K562 (cell line): ENCODE measurements at regions of chr3 and their contacts with region 1.

Region 1: GRCh38 chr3:183188895-183189462 is 26.4 kb upstream of the LAMP3 start:
- DNase-seq: peak; percentile 38 to 72 (median 50)
- ATAC-seq: peak; percentile 94
- H3K4me3 ChIP-seq: no peak overlapping the region
- H3K27ac ChIP-seq: no peak overlapping the region
- H3K4me1 ChIP-seq: 0 out of 5 replicates have a peak, but pooled peaks cover 0 to 2% of the 10 kb centered on the region in 2 experiments
- H3K27me3 ChIP-seq: no peaks in the 10 kb centered on the region
- CTCF ChIP-seq: peak; percentile 69 to 74 (median 73)
- EP300 ChIP-seq: no peak
- POLR2A ChIP-seq: no peak
- RAD21 ChIP-seq: peak; percentile 37 to 61

Region 2: GRCh38 chr3:183027276-183027675 is 161.7 kb before region 1 on chr3:
- CTCF ChIA-PET with region 1: no interaction called
- POLR2A ChIA-PET with region 1: no interaction called
- in situ Hi-C with region 1: no loop called
- intact Hi-C with region 1: no loop called
- DNase-seq: no peak
- ATAC-seq: no peak
- H3K4me3 ChIP-seq: no peak overlapping the region
- H3K27ac ChIP-seq: no peak overlapping the region
- H3K4me1 ChIP-seq: no peaks in the 10 kb centered on the region
- H3K27me3 ChIP-seq: no peaks in the 10 kb centered on the region
- CTCF ChIP-seq: no peak
- EP300 ChIP-seq: no peak
- POLR2A ChIP-seq: no peak
- RAD21 ChIP-seq: no peak

Region 3: DNA sequence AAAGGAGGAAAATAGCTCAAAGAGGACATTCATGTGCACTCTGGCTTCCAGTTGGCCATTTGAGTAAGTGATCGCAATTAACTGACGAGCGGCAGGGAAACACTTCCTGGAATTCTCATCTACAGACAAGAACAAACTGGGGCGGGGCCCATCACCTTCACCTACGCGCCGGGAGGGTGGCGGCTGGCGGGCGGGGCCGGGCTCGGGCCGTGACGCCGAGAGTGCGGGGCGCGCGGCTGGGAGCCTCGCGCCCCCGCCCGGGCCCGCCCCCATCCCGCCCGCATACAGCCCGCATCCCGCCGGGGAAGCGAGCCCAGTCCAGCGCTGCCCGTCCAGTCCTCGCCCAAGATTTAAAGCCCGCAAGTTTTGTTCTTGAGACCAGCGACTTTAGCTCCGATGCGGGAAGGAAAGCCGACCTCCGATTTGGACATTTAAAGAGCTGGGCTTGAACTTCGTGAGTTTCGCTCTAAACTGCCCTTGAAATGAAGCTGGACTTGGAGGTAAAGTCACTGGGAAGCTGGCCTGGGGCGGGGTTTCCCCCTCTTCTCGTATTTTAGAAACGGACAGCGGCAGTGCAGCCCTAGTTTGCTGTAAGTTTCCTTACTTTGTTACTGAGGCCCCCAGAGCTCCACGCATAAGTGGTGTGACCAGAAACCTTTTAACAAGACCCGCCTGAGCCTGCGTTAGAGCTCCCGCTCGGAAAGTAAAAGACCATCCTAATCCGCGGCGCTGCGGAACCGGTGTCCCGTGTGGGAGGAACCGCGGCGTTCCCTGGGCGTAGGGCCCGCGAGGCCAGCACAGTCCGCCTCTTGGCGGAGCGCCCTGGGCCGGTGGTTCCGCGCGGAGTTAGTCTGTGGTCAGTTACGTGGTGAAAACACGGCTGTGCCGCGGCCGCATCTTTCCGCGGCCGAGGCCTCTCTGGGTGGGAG is 64.3 kb after region 1 on chr3 and contains the start of gene B3GNT5:
- CTCF ChIA-PET with region 1: no interaction called
- POLR2A ChIA-PET with region 1: no interaction called
- in situ Hi-C with region 1: no loop called
- intact Hi-C with region 1: loop called (anchors 5 kb)
- DNase-seq: peak; percentile 64 to 86 (median 74)
- ATAC-seq: peak; percentile 65
- H3K4me3 ChIP-seq: peak within 1 kb of the TSS; percentile 52
- H3K27ac ChIP-seq: peak within 1 kb of the TSS; percentile 83
- H3K4me1 ChIP-seq: peaks cover 11 to 18% of the 10 kb centered on the region in 2 experiments; a peak in 4 of 5 replicates
- H3K27me3 ChIP-seq: no peaks in the 10 kb centered on the region
- CTCF ChIP-seq: no peak
- EP300 ChIP-seq: 0 out of 2 replicates have a peak, but pooled peaks have one; percentile 12
- POLR2A ChIP-seq: peak; percentile 57; the same call in 1 of the 2 replicates
- RAD21 ChIP-seq: no peak
- polyA plus RNA-seq, gene B3GNT5: 13.6 to 13.8 TPM

Region 4: GRCh38 chr3:183377307-183377959 is 188.5 kb after region 1 on chr3:
- CTCF ChIA-PET with region 1: interaction called, 61 read pairs
- POLR2A ChIA-PET with region 1: interaction called, 8 read pairs
- in situ Hi-C with region 1: no loop called
- intact Hi-C with region 1: loop called (anchors 1 kb)
- DNase-seq: no peak
- ATAC-seq: no peak
- H3K4me3 ChIP-seq: no peak overlapping the region
- H3K27ac ChIP-seq: no peak overlapping the region
- H3K4me1 ChIP-seq: peaks cover 4 to 14% of the 10 kb centered on the region in 2 experiments
- H3K27me3 ChIP-seq: no peaks in the 10 kb centered on the region
- CTCF ChIP-seq: no peak
- EP300 ChIP-seq: no peak
- POLR2A ChIP-seq: no peak
- RAD21 ChIP-seq: no peak

Region 5: GRCh38 chr3:183385698-183386613 is 197.0 kb after region 1 on chr3:
- CTCF ChIA-PET with region 1: interaction called, 61 read pairs
- POLR2A ChIA-PET with region 1: interaction called, 8 read pairs
- in situ Hi-C with region 1: loop called (anchors 5 kb)
- intact Hi-C with region 1: loop called (anchors 1 kb)
- DNase-seq: peak; percentile 59 to 79 (median 60)
- ATAC-seq: peak; percentile 89
- H3K4me3 ChIP-seq: no peak overlapping the region
- H3K27ac ChIP-seq: no peak overlapping the region
- H3K4me1 ChIP-seq: peaks cover 0 to 3% of the 10 kb centered on the region in 2 experiments; a peak in 3 of 5 replicates
- H3K27me3 ChIP-seq: no peaks in the 10 kb centered on the region
- CTCF ChIP-seq: peak; percentile 75 to 85 (median 75)
- EP300 ChIP-seq: no peak
- POLR2A ChIP-seq: no peak
- RAD21 ChIP-seq: peak; percentile 88 to 92

Region 6: DNA sequence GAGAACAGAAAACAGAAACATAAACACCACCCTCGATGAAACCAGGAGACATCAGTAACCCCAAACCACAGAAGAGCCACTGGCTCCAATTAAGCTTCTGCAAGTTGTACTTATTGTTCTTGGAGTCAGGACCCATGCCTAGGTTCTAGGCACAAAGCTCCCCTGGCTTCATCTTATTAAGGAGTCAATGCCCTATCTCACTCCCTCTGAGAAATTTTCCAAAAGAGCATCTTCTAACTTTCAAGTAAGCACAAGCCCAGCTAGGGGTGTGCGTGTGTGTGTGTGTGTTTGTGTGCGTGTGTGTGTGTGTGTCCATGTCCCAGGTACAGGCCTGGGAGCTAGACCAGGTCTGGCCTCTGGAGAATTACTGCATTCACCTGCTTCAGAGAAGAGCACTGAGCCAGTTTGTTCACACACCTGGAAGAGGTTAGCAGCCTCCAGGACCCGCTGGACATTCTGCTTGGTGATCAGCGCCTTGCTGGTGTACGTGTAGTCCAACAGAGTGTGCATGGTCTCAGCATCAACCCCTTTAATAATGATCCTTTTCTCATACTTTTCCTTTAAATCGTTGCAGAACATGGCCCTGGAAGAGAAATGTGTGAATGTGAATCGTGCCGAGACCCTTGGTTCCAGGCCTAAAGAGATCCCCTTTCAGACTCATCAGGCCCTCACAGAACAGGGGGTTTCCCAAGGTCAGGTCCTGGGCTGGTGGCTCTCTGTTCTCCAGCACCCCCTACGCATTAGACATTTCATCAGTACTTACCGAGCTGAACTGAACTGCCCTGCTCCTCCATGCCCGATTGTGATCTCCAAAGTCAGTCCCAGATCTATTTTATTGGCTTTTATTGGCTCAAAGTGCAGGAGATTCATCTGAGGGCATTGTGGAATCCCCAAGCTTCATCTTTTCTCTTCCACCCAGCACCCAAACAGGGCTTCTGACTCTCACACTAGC is 338.7 kb after region 1 on chr3:
- CTCF ChIA-PET with region 1: no interaction called
- POLR2A ChIA-PET with region 1: no interaction called
- in situ Hi-C with region 1: no loop called
- intact Hi-C with region 1: no loop called
- DNase-seq: no peak
- ATAC-seq: no peak
- H3K4me3 ChIP-seq: no peak overlapping the region
- H3K27ac ChIP-seq: no peak overlapping the region
- H3K4me1 ChIP-seq: peaks cover 0 to 5% of the 10 kb centered on the region in 2 experiments; a peak in 4 of 5 replicates
- H3K27me3 ChIP-seq: no peaks in the 10 kb centered on the region
- CTCF ChIP-seq: no peak
- EP300 ChIP-seq: no peak
- POLR2A ChIP-seq: no peak
- RAD21 ChIP-seq: no peak

Region 7: DNA sequence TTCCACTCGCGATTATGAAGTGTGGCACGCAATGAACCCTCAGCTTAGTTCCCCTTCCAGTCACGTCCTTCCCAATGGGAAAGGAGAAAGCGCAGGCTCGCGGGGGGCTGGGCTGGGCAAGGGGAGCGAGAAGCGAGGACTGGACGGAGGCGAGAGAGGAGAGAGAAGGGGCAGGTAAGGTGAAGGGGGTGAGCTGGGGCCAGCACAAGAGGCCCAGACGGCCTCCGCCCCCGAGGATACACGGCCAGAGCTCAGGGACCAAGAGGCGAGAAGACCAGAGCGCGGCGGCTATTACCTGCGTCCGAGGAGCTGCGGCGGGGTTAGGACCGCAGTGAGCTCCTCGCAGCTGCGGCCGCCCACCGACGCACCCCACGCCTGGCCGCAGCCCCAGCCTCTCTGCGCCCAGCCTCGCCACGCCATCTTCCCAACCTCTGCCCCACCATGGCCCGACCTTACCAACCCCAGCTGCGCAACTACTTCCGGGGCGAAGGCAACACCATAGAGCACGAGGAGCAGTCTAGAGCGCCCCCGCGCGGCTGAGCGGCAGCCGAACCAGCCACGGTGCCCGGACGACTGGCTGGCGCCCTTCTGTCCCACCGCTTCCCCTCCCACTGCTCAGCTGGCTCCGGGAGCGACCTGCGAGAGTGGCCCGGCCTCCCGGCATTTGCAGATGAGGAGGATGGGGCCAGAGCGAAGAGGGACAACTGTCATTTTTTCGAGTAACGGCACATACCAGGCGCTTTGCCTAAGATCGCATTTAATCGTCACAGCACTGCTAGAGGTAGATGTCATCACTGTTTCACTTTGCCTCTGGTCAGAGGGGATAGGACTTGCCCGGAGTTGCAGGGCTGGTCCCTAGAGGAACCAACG is 695.7 kb after region 1 on chr3 and contains the start of gene PARL:
- CTCF ChIA-PET with region 1: no interaction called
- POLR2A ChIA-PET with region 1: no interaction called
- in situ Hi-C with region 1: no loop called
- intact Hi-C with region 1: loop called (anchors 5 kb)
- DNase-seq: peak; percentile 92 to 97 (median 92)
- ATAC-seq: peak; percentile 99
- H3K4me3 ChIP-seq: peak within 1 kb of the TSS; percentile 96
- H3K27ac ChIP-seq: peak within 1 kb of the TSS; percentile 87
- H3K4me1 ChIP-seq: peaks cover 12% of the 10 kb centered on the region in 2 experiments; a peak in 4 of 5 replicates
- H3K27me3 ChIP-seq: peaks cover 0 to 7% of the 10 kb centered on the region in 2 experiments; a peak in 2 of 5 replicates
- CTCF ChIP-seq: peak; percentile 94 to 97 (median 96)
- EP300 ChIP-seq: peak; percentile 53
- POLR2A ChIP-seq: peak; percentile 94
- RAD21 ChIP-seq: peak; percentile 77 to 81
- polyA plus RNA-seq, gene PARL: 39.5 to 43.6 TPM